ENCODE measurements at regions of chr1 and their contacts with region 1.

Region 1: GRCh38 chr1:147786536-147786935 is 26.1 kb upstream of the GJA5 start:
- DNase-seq: no peak
- ATAC-seq: no peak
- H3K4me3 Mint-ChIP-seq: no peak overlapping the region
- H3K27ac Mint-ChIP-seq: no peak overlapping the region
- H3K4me1 Mint-ChIP-seq: no peaks in the 10 kb centered on the region
- H3K27me3 Mint-ChIP-seq: peaks cover 7% of the 10 kb centered on the region

Region 2: GRCh38 chr1:147748676-147749350 is 37.7 kb before region 1 on chr1:
- CTCF ChIA-PET with region 1: no interaction called
- POLR2A ChIA-PET with region 1: no interaction called
- intact Hi-C with region 1: loop called in 1 of 2 experiments (anchors 5 kb)
- DNase-seq: no peak
- ATAC-seq: no peak
- H3K4me3 Mint-ChIP-seq: no peak overlapping the region
- H3K27ac Mint-ChIP-seq: no peak overlapping the region
- H3K4me1 Mint-ChIP-seq: no peaks in the 10 kb centered on the region
- H3K27me3 Mint-ChIP-seq: no peaks in the 10 kb centered on the region

Region 3: DNA sequence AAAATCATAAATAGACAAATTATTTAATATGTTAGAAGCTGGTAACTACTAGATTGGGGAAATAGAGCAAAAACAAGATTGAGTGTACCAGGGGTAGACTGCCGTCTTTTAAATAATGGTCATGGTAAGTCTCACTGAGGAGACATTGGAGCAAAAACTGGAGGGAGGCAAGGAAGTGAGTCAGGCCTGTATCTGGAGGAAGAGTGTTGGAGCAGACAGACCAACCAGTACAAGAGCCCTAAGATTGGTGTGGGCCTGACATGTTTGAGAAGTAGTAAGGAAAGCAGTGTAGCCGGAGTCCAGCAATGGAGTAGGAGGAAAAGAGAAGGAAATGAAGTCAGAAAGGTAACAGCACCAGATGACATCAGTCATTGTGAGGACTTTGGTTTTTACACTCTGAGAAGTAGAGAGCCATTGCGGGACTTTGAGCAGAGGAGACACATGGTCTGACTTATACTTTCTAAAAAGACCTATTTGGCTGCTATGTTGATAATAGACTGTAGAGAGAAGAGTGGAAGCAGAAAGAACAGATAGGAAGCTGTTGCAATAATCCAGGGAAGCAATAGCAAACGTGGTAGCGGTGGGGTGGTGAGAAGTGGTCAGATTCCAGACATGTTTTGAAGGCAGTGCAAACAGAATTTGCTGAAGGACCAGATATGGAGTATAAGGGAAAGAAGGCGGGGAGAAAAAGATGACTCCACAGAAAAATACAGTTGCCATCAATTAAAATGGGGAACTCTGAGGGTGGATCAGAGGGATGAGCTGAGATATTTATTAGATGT is 18.6 kb after region 1 on chr1:
- CTCF ChIA-PET with region 1: interaction called, 4 read pairs
- POLR2A ChIA-PET with region 1: interaction called, 4 read pairs
- intact Hi-C with region 1: loop called in 1 of 2 experiments (anchors 2 kb)
- DNase-seq: no peak
- ATAC-seq: no peak
- H3K4me3 Mint-ChIP-seq: no peak overlapping the region
- H3K27ac Mint-ChIP-seq: no peak overlapping the region
- H3K4me1 Mint-ChIP-seq: no peaks in the 10 kb centered on the region
- H3K27me3 Mint-ChIP-seq: peaks cover 5% of the 10 kb centered on the region